ENCODE measurements at regions of chr11 and their contacts with region 1.

Region 1: DNA sequence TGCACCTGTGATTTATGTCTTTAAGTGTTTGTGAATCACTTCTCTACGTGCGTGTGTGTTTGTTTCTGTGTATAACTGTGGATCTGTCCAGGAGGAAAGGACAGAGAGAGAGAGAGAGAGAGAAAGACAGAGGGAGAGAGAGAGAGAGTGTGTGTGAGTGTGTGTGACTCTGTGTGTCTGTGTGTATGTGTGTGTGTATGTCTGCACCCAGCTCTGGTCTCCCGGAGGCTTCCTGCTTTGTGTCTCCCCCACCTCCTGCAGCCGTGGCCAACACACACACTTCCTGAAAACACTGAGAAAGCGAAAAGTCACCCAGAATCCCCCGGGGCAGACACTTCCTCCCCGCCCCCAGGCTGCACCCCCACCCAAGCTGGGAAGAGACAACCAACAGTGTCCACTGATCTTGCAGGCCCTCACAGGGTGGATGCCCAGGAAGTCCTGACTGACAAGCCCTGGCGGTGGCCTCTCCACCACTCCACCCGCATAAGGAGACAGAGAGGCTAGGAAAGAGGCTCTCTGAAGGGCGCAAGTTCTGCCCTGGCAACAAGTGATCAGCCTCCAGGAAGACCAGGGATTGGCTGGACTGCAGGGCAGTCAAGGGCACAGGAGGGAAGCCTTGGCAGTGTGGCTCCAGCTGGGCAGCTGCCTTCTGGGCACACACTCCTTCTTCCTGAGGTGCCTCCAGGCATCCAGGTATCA is 30.0 kb downstream of the ARAP1 start:
- DNase-seq: peak in 1 of 2 donors; percentile 97
- H3K4me3 ChIP-seq: peak overlapping the region; percentile 62 to 68
- H3K27ac ChIP-seq: peak overlapping the region; percentile 88
- H3K4me1 ChIP-seq: peaks cover 66% of the 10 kb centered on the region
- H3K27me3 ChIP-seq: no peaks in the 10 kb centered on the region
- CTCF ChIP-seq: no peak
- POLR2A ChIP-seq: peak in 1 of 2 donors; percentile 40

Region 2: DNA sequence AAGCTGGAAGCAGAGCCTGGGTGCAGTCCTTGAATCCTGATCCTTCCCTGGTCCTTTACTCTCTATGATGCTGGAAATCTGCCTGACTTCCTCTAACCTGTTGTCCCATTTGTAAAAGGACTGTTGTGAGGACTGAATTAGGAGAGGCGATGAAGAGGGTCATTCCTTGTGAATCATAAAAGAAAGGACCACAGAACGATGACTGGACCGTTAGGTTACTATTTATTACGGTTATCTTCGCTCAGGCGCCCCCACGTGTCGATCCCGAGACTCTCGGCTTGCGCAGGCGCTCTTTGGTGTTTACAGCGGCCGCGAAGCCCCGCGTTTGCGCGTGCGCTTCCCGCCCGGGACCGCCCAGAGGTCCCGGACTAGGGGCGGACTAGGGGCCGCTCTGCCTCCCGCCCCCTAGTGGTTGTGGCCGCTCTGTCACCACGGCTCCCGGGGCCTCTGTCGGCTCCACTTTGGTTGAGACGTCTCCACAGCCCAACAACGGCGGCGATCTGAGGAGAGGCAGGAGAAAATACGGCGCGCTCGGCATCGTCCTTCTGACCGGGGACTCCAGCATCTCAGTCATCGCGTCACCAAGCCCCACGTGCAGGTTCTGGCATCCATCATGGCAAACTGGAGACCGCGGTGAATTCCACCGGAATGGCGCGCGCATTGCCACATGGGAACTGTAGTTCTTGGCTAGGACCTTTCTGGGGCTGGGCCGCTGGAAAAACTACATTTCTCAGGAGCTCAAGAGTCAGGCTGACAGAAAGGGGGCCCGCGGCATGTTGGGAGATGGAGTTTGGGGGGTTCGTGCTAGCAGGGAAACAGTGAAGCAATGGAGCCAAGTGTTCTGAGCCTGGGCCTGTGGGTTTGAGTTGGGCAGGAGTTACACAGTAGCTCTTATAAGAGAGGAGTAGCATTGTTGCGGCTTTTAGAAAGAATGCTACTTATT is 71.5 kb after region 1 on chr11 and contains the start of gene STARD10:
- intact Hi-C with region 1: loop called (anchors 5 kb)
- DNase-seq: peak in 1 of 2 donors; percentile 95
- H3K4me3 ChIP-seq: peak within 1 kb of the TSS; percentile 49 to 63
- H3K27ac ChIP-seq: peak within 1 kb of the TSS; percentile 92
- H3K4me1 ChIP-seq: peaks cover 30% of the 10 kb centered on the region
- H3K27me3 ChIP-seq: no peaks in the 10 kb centered on the region
- CTCF ChIP-seq: peak; percentile 98 to 100 (median 100)
- POLR2A ChIP-seq: no peak
- total RNA-seq, gene STARD10: 75.9 TPM

Region 3: GRCh38 chr11:72897506-72897905 is 175.3 kb after region 1 on chr11:
- intact Hi-C with region 1: no loop called
- DNase-seq: no peak
- H3K4me3 ChIP-seq: no peak overlapping the region
- H3K27ac ChIP-seq: no peak overlapping the region
- H3K4me1 ChIP-seq: no peaks in the 10 kb centered on the region
- H3K27me3 ChIP-seq: no peaks in the 10 kb centered on the region
- CTCF ChIP-seq: no peak
- POLR2A ChIP-seq: no peak

Region 4: DNA sequence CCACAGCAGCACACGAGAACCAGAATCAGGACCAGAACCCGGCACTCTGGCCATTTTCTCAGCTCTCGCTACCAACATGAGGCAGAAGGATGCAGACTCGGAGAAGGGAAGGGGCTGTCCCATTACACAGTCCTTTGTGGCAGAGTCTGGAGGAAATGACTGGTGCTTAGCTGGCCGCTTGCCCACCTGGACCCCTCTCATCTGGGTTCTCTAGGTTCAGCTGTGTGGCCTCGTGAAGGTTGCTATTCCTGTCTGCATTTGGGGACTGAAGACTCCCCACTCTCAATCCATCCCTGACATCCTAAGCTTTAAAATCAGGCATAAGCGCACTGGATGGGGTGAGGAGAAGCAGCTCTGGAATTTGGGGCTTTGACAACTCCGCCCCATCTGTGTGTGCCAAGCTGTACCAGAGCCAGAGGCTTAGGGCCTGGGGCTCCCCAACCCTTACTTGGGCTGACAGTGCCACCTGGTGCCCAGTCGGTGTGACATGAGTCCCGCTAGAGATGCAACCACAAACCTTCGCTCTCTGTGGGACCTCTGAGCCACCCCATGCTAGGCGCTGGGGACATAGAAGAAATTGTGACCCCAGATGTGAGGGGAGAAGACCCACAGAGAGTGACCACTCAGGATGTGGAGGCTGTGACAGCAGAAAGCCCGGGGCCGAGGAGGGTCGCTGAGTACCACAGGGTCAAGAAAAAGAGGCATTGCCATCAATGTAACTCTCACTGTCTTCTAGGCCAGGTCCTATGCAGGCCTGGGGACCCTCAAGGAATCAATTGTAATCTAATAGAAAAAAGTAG is 455.8 kb after region 1 on chr11:
- intact Hi-C with region 1: loop called (anchors 5 kb)
- DNase-seq: no peak
- H3K4me3 ChIP-seq: no peak overlapping the region
- H3K27ac ChIP-seq: peak overlapping the region; percentile 49
- H3K4me1 ChIP-seq: peaks cover 23% of the 10 kb centered on the region
- H3K27me3 ChIP-seq: no peaks in the 10 kb centered on the region
- CTCF ChIP-seq: peak; percentile 84 to 92 (median 86)
- POLR2A ChIP-seq: no peak

Measured in vagina (tissue), 2 donors.